Naive thymus-derived CD4-positive, alpha-beta T cell (primary cell): ENCODE measurements at regions of chr17 and their contacts with region 1.

Region 1: GRCh38 chr17:75034236-75034908 is 12.4 kb downstream of the ATP5PD start:
- DNase-seq: peak; percentile 63 to 95 (median 77)
- ATAC-seq: peak; percentile 37
- H3K4me3 ChIP-seq: peak overlapping the region; percentile 72
- H3K4me3 Mint-ChIP-seq: peak overlapping the region; percentile 85 to 97 (median 94)
- H3K27ac ChIP-seq: peak overlapping the region; percentile 77
- H3K27ac Mint-ChIP-seq: peak overlapping the region; percentile 95 to 100 (median 99)
- H3K4me1 ChIP-seq: peaks cover 36 to 40% of the 10 kb centered on the region in 2 donors
- H3K4me1 Mint-ChIP-seq: peaks cover 26 to 73% (median 58%) of the 10 kb centered on the region in 7 donors
- H3K27me3 ChIP-seq: no peaks in the 10 kb centered on the region
- H3K27me3 Mint-ChIP-seq: peaks cover 0 to 10% (median 0%) of the 10 kb centered on the region in 5 donors

Region 2: GRCh38 chr17:74935585-74936469 is 98.5 kb before region 1 on chr17 and contains the start of gene OTOP3:
- CTCF ChIA-PET with region 1: no interaction called
- POLR2A ChIA-PET with region 1: no interaction called
- intact Hi-C with region 1: no loop called
- DNase-seq: no peak
- ATAC-seq: no peak
- H3K4me3 ChIP-seq: no peak within 1 kb of the TSS
- H3K4me3 Mint-ChIP-seq: peak within 1 kb of the TSS in 1 of 10 donors; percentile 12
- H3K27ac ChIP-seq: no peak within 1 kb of the TSS
- H3K27ac Mint-ChIP-seq: no peak within 1 kb of the TSS
- H3K4me1 ChIP-seq: no peaks in the 10 kb centered on the region
- H3K4me1 Mint-ChIP-seq: peaks cover 0 to 6% (median 0%) of the 10 kb centered on the region in 7 donors
- H3K27me3 ChIP-seq: peaks cover 0 to 15% of the 10 kb centered on the region in 2 donors
- H3K27me3 Mint-ChIP-seq: peaks cover 55 to 77% (median 71%) of the 10 kb centered on the region in 5 donors
- total RNA-seq, gene OTOP3: not detected

Region 3: GRCh38 chr17:74972107-74972972 is 62.0 kb before region 1 on chr17 and contains the start of gene HID1:
- CTCF ChIA-PET with region 1: no interaction called
- POLR2A ChIA-PET with region 1: interaction called, 15 read pairs
- intact Hi-C with region 1: loop called (anchors 2 kb)
- DNase-seq: peak; percentile 60 to 79 (median 74)
- ATAC-seq: peak; percentile 93
- H3K4me3 ChIP-seq: peak within 1 kb of the TSS; percentile 58
- H3K4me3 Mint-ChIP-seq: peak within 1 kb of the TSS; percentile 80 to 98 (median 87)
- H3K27ac ChIP-seq: peak within 1 kb of the TSS; percentile 51
- H3K27ac Mint-ChIP-seq: peak within 1 kb of the TSS in 8 of 9 donors; percentile 56 to 86 (median 80)
- H3K4me1 ChIP-seq: peaks cover 4 to 9% of the 10 kb centered on the region in 2 donors
- H3K4me1 Mint-ChIP-seq: peaks cover 5 to 18% (median 7%) of the 10 kb centered on the region in 7 donors
- H3K27me3 ChIP-seq: no peaks in the 10 kb centered on the region
- H3K27me3 Mint-ChIP-seq: peaks cover 0 to 55% (median 7%) of the 10 kb centered on the region in 5 donors
- total RNA-seq, gene HID1: 0.60 to 25.2 (median 14.8) TPM

Region 4: DNA sequence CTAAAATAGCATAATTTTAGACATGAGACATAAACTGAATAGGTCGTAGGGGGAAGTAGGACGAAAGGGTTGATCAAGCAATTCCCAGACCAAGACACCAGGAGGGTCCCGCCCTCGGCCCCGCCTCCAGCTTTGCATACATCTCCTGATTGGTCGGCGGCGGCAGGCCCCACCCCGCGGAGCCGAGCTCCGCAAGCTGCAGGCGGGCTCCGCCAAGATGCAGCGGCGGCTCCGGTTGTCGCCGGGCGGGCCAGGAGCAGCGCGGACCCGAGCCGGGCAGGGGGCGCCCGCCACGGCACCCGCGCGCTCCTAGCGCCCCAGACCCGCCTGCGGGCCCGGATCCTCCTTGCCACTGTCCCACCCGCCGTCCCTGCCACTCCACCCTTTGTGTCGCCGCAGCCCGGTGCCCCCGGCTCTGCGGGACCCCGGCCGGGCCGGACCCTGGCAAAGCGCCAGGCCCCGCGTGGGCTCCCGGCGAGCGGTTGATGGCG is 46.9 kb before region 1 on chr17 and contains the start of gene CDR2L:
- CTCF ChIA-PET with region 1: no interaction called
- POLR2A ChIA-PET with region 1: interaction called, 3 read pairs
- intact Hi-C with region 1: loop called in 1 of 2 experiments (anchors 1 kb)
- DNase-seq: peak; percentile 87 to 94 (median 90)
- ATAC-seq: peak; percentile 98
- H3K4me3 ChIP-seq: peak within 1 kb of the TSS; percentile 44
- H3K4me3 Mint-ChIP-seq: peak within 1 kb of the TSS; percentile 84 to 94 (median 89)
- H3K27ac ChIP-seq: peak within 1 kb of the TSS; percentile 8
- H3K27ac Mint-ChIP-seq: peak within 1 kb of the TSS in 8 of 9 donors; percentile 10 to 83 (median 66)
- H3K4me1 ChIP-seq: peaks cover 6 to 14% of the 10 kb centered on the region in 2 donors
- H3K4me1 Mint-ChIP-seq: peaks cover 5 to 15% (median 10%) of the 10 kb centered on the region in 7 donors
- H3K27me3 ChIP-seq: no peaks in the 10 kb centered on the region
- H3K27me3 Mint-ChIP-seq: peaks cover 0 to 59% (median 0%) of the 10 kb centered on the region in 5 donors
- total RNA-seq, gene CDR2L: 0.08 to 0.17 (median 0.16) TPM in 3 of 5 experiments, not detected in the others

Region 5: DNA sequence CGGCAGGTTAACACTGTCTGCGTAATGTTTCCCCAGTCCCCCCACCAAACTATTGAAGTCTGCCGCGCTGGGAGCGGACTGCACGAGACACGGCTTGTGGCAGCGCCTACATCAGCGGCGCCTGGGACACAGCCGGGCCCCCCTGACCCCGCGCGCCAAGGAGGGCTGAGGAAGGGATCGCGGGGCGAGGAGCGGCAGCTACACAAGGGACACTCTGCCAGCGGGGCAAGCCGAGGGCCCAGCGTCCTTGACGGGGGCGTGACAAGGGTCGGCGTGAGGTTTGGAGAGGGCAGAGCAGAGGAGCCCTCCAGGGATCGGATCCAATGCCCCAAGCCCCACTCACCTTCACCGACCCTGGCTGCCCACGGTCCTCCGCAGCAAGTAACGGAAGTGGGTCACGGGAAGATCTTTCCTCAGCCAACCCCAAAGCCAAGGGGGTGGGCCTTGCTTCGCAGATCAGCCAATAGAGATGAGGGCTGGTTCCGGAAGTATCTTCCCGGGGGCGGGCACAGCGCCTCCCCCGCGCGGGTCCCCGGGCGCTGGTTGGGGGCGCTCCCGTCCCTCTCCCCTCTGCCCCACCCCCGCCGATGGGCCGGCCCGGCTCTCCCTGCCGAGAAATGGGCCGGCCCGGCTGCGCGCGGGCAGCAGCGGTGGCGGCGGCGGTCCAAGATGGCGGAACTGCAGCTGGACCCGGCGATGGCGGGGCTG is 12.4 kb after region 1 on chr17 and contains the starts of genes ATP5PD and KCTD2:
- CTCF ChIA-PET with region 1: interaction called, 3 read pairs
- POLR2A ChIA-PET with region 1: interaction called, 58 read pairs
- intact Hi-C with region 1: loop called (anchors 1 kb)
- DNase-seq: peak; percentile 82 to 93 (median 91)
- ATAC-seq: peak; percentile 98
- H3K4me3 ChIP-seq: peak within 1 kb of the TSS; percentile 77
- H3K4me3 Mint-ChIP-seq: peak within 1 kb of the TSS; percentile 95 to 99 (median 98)
- H3K27ac ChIP-seq: peak within 1 kb of the TSS; percentile 93
- H3K27ac Mint-ChIP-seq: peak within 1 kb of the TSS; percentile 92 to 99 (median 96)
- H3K4me1 ChIP-seq: peaks cover 13 to 16% of the 10 kb centered on the region in 2 donors
- H3K4me1 Mint-ChIP-seq: peaks cover 30 to 62% (median 49%) of the 10 kb centered on the region in 7 donors
- H3K27me3 ChIP-seq: no peaks in the 10 kb centered on the region
- H3K27me3 Mint-ChIP-seq: no peaks in the 10 kb centered on the region
- total RNA-seq, gene ATP5PD: 113 to 195 (median 161) TPM
- total RNA-seq, gene KCTD2: 19.5 to 35.7 (median 23.0) TPM

Region 6: GRCh38 chr17:75087558-75088453 is 53.4 kb after region 1 on chr17 and contains the start of gene SLC16A5:
- CTCF ChIA-PET with region 1: no interaction called
- POLR2A ChIA-PET with region 1: interaction called, 7 read pairs
- intact Hi-C with region 1: loop called in 1 of 2 experiments (anchors 2 kb)
- DNase-seq: peak; percentile 29 to 73 (median 51)
- ATAC-seq: peak; percentile 73
- H3K4me3 ChIP-seq: peak within 1 kb of the TSS; percentile 60
- H3K4me3 Mint-ChIP-seq: peak within 1 kb of the TSS; percentile 58 to 90 (median 84)
- H3K27ac ChIP-seq: peak within 1 kb of the TSS; percentile 79
- H3K27ac Mint-ChIP-seq: peak within 1 kb of the TSS; percentile 77 to 94 (median 91)
- H3K4me1 ChIP-seq: peaks cover 6 to 29% of the 10 kb centered on the region in 2 donors
- H3K4me1 Mint-ChIP-seq: peaks cover 51 to 74% (median 58%) of the 10 kb centered on the region in 7 donors
- H3K27me3 ChIP-seq: no peaks in the 10 kb centered on the region
- H3K27me3 Mint-ChIP-seq: no peaks in the 10 kb centered on the region
- total RNA-seq, gene SLC16A5: 9.2 to 26.3 (median 24.5) TPM

Region 7: DNA sequence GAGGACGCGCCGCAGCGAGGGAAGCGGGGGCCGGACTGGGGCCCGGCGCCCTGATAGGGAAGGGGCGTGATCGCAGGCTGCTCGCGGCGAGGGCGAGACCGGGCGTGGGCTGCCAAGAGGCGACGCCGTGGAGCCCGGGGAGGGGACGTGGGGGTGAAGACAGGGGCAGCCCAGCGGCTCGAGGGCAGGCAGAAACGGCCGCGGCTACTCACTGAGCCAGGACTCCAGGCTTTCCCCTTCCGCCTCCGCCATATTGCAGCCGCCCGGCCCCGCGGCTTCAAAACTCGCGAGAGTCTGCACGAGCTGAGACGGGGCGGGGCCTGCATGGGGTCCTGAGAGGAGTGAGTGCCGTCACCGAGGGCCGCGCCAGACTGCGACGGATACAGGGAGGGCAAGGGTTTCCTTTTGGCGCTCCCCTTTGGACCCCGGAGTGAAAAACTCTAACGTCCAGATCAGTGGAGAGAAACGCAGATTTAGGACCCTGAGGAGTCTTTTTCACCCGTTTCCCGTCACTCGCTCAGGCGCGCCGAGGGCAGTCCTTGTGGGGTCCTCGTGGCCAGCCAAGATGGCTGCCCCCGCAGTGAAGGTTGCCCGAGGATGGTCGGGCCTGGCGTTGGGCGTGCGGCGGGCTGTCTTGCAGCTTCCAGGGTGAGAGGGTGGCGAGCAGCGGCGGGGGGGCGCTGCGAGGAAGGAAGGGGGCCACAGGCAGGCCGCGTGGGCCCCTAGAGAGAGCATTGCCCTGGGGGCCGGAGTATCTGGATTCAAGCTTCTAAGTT is 227.2 kb after region 1 on chr17 and contains the starts of genes GGA3 and MRPS7:
- CTCF ChIA-PET with region 1: no interaction called
- POLR2A ChIA-PET with region 1: interaction called, 8 read pairs
- intact Hi-C with region 1: loop called (anchors 1 kb)
- DNase-seq: peak; percentile 94 to 98 (median 96)
- ATAC-seq: peak; percentile 97
- H3K4me3 ChIP-seq: peak within 1 kb of the TSS; percentile 98
- H3K4me3 Mint-ChIP-seq: peak within 1 kb of the TSS; percentile 94 to 100 (median 97)
- H3K27ac ChIP-seq: peak within 1 kb of the TSS; percentile 99
- H3K27ac Mint-ChIP-seq: peak within 1 kb of the TSS; percentile 100
- H3K4me1 ChIP-seq: peaks cover 23% of the 10 kb centered on the region in 2 donors
- H3K4me1 Mint-ChIP-seq: peaks cover 40 to 65% (median 62%) of the 10 kb centered on the region in 7 donors
- H3K27me3 ChIP-seq: no peaks in the 10 kb centered on the region
- H3K27me3 Mint-ChIP-seq: no peaks in the 10 kb centered on the region
- total RNA-seq, gene GGA3: 79.6 to 128 (median 87.4) TPM
- total RNA-seq, gene MRPS7: 29.2 to 70.1 (median 34.4) TPM